ENCODE measurements at regions of chr21 and their contacts with region 1.

Region 1: DNA sequence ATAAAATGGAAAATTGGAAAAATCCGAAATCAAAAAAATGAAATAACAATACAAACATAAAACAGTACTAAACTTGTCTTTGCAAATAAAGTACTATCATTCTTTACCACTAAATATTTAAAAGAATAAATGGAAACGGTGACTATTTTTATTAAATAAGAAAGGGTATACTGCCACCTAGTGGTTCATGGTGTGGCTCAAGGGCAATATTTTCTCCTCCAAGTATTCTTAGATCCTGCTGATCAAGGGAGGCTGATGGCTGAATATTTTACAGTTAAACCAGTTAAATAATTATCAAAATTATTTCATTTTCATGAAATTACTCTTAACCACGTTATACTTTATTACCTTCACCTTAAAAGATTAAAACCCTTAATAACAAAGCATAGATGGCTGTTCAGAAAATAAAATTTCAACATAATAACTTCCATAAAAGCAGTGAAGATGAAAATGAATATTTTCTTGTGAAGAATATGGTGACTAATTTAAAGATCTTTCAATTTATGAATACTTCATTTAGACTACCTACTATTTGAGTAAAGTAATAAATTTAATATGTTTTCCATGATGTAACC is 1793.9 kb downstream of the NCAM2 start:
- DNase-seq: peak; percentile 64
- H3K4me3 ChIP-seq: no peak overlapping the region
- H3K27ac ChIP-seq: no peak overlapping the region
- H3K4me1 ChIP-seq: no peaks in the 10 kb centered on the region
- CTCF ChIP-seq: peak; percentile 92

Region 2: DNA sequence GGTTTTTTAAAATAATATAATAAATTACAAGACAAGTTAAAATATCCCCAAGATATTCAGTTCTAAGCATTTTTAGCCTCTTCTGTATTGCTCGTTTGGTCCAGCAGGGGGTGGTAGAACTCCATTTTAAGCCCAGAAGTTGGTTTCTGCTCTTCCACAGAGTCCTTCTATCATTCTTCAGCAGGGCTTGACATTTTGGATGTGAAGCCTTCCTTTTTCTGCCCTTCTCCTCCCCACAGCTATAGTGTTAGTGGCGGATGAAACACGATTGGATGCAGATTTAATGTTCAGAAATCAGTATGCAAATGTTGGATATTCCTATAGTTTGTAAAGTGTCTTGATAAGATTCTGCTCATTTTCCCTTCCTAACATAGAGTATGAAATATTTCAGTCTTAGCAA is 1792.4 kb before region 1 on chr21:
- CTCF ChIA-PET with region 1: no interaction called
- POLR2A ChIA-PET with region 1: no interaction called
- intact Hi-C with region 1: loop called (anchors 2 kb)
- DNase-seq: peak; percentile 15
- H3K4me3 ChIP-seq: no peak overlapping the region
- H3K27ac ChIP-seq: no peak overlapping the region
- H3K4me1 ChIP-seq: no peaks in the 10 kb centered on the region
- CTCF ChIP-seq: peak; percentile 84

Region 3: GRCh38 chr21:21165063-21165645 is 1626.9 kb before region 1 on chr21:
- CTCF ChIA-PET with region 1: no interaction called
- POLR2A ChIA-PET with region 1: no interaction called
- intact Hi-C with region 1: loop called (anchors 5 kb)
- DNase-seq: no peak
- H3K4me3 ChIP-seq: no peak overlapping the region
- H3K27ac ChIP-seq: no peak overlapping the region
- H3K4me1 ChIP-seq: no peaks in the 10 kb centered on the region
- CTCF ChIP-seq: no peak

Region 4: GRCh38 chr21:22154579-22155274 is 637.3 kb before region 1 on chr21:
- CTCF ChIA-PET with region 1: no interaction called
- POLR2A ChIA-PET with region 1: interaction called, 10 read pairs
- intact Hi-C with region 1: no loop called
- DNase-seq: no peak
- H3K4me3 ChIP-seq: no peak overlapping the region
- H3K27ac ChIP-seq: no peak overlapping the region
- H3K4me1 ChIP-seq: no peaks in the 10 kb centered on the region
- CTCF ChIP-seq: no peak

Region 5: GRCh38 chr21:22575165-22575584 is 216.9 kb before region 1 on chr21:
- CTCF ChIA-PET with region 1: no interaction called
- POLR2A ChIA-PET with region 1: no interaction called
- intact Hi-C with region 1: loop called (anchors 10 kb)
- DNase-seq: peak; percentile 62
- H3K4me3 ChIP-seq: peak overlapping the region; percentile 55
- H3K27ac ChIP-seq: peak overlapping the region; percentile 39
- H3K4me1 ChIP-seq: peaks cover 6% of the 10 kb centered on the region
- CTCF ChIP-seq: peak; percentile 73

Region 6: GRCh38 chr21:22813201-22813600 is 21.1 kb after region 1 on chr21:
- CTCF ChIA-PET with region 1: no interaction called
- POLR2A ChIA-PET with region 1: no interaction called
- intact Hi-C with region 1: no loop called
- DNase-seq: no peak
- H3K4me3 ChIP-seq: no peak overlapping the region
- H3K27ac ChIP-seq: no peak overlapping the region
- H3K4me1 ChIP-seq: no peaks in the 10 kb centered on the region
- CTCF ChIP-seq: no peak